ENCODE measurements at regions of chr5 and their contacts with region 1.

Region 1: DNA sequence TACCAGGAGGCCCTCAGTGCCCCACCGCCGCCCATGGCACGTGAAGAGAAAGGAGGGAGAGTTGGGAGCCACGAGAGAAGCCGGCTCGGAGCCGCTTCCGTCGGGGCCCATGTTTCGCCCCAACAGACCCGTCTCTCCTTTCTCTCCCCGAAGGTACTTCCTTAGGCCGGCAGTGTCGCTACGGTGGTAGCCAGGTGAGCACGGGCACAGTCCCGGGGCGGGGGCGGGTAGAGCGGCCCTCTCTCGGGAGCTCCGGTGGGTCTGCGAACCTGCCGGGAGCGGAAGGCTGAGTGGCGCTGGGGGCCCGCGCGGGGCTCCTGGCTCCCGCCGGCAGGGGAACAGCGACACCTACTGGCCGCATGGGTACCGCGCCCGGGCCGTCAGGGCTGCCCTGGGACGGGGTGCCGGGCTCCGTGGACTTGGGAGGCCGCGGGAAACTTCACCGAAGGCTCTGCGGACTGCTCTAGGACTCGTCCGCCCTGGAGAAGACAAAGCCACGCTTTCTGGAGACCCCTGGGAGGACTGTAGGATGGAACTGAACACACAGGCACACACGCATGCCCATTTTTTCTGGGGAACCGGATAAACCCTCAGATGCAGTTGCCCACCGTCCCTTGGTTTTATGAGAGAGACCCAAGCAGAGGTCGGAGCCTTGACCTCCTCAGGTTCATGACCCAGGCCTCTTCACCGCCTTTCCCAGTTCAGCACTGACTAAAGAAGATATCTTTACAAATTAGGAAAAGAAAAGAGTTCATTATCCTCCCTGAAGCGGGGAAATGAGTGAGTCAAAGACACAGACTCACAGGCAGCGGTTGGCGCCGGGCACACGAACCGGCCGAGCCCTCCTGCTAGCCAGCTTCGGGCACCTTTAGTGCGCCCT is 202.5 kb downstream of the MEF2C start:
- DNase-seq: no peak
- H3K4me3 ChIP-seq: peak overlapping the region; percentile 18; the same call in 1 of the 2 replicates
- H3K27me3 ChIP-seq: peaks cover 51% of the 10 kb centered on the region
- CTCF ChIP-seq: peak; percentile 83

Region 2: DNA sequence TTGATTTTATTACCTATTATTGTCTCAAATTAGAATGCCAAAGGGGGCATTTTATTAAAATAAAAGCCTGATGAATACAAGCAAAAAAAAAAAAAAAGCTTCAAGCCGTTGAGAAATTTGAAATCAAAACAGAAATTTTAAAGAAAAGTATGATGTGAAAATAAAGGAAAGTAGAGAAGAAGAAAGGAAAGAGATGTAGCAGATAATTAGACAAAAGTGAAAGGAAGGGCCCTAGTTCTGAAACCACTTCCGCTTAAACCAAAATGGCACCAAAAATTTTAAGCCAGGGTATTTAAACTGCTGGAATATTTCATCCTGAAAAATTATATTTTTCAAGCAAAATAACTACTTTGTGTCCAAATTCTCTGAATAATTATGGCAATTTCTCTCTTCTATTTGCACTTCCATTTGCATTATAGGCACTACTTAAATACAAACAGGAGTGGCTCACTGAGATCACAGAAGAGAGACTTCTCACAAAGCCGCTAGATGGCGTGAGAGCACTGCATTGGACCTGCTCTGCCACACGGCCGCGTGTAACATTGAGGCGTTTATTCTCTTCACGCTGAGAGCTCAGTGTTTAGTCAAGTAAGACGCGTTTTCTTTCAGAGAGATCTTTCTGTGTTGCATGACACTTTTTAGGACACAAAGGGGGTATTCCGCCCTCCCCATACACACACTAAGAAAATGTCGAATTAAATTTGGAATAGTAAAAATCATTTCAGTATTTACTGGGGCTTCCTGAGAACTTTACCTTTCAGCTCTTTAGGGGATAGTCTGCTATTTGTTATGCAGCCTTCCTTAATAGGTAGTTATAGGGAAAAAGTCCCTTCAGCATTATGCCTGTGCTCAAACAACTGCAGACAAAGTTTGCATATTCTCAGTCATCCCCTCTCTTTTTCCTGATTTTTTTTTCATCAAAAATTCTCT is 899.4 kb before region 1 on chr5:
- CTCF ChIA-PET with region 1: interaction called, 61 read pairs
- POLR2A ChIA-PET with region 1: no interaction called
- DNase-seq: peak; percentile 2
- H3K4me3 ChIP-seq: no peak overlapping the region
- H3K27me3 ChIP-seq: no peaks in the 10 kb centered on the region
- CTCF ChIP-seq: peak; percentile 95

Region 3: DNA sequence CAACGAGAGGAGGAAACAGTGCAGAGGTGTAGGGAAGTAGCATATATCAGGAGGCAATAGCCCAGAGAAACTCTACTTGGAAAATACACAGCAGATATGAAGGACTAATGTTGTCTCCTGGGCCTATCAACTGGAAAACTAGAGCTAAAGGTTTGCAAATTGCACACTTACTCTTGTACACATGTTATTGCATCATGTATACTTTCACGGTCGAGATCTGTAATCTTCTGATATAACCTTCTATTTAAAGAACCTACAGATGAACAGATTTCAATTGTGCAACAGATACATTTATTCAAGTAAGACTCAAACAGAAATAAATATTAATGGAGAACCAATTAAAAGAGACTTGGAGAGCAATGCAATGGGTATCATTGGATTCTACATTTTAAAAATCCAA is 155.6 kb before region 1 on chr5:
- CTCF ChIA-PET with region 1: no interaction called
- POLR2A ChIA-PET with region 1: no interaction called
- DNase-seq: no peak
- H3K4me3 ChIP-seq: no peak overlapping the region
- H3K27me3 ChIP-seq: no peaks in the 10 kb centered on the region
- CTCF ChIP-seq: no peak

Measured in BJ (cell line).